ENCODE measurements at regions of chr17 and their contacts with region 1.

Region 1: GRCh38 chr17:81537343-81537855 is 9.2 kb downstream of the FSCN2 start:
- DNase-seq: peak; percentile 81
- ATAC-seq: peak; percentile 79
- H3K4me3 Mint-ChIP-seq: peak overlapping the region; percentile 27
- H3K27ac Mint-ChIP-seq: no peak overlapping the region
- H3K4me1 Mint-ChIP-seq: no peaks in the 10 kb centered on the region
- H3K27me3 Mint-ChIP-seq: peaks cover 23% of the 10 kb centered on the region
- CTCF ChIP-seq: peak; percentile 60

Region 2: DNA sequence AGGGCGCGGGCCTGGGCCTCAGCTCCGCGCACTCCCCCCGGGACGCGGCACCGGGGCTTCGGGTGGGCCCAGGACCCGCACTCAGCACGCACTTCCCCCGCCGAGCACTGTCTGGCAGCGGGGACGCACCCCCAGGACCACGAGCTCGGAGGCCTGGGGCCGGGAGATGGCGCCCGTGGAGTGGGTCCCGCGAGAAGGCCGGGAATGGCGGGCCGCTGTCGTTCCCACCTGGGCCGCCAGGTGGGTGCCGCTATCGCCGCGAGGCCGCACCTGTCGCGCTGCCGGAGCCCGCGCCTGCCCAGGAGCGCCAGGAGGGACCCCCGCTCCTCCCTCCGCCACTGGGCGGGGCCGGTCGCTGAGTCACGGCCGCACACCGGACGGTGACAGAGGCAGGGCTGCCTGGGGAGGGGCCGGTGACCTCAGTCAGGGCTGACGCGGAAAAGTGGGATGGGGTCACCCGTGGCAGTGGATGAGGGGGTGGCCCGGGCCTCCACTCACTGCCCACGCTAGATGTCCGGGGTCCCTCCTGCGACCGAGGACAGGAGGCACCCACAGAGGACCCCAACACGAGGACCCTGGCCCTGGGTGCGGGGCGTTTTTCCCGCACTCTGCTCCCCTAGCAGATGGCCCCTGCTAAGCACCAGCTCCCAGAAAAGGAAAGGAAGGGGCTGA is 18.0 kb before region 1 on chr17:
- CTCF ChIA-PET with region 1: interaction called, 31 read pairs
- POLR2A ChIA-PET with region 1: interaction called, 9 read pairs
- DNase-seq: peak; percentile 68
- ATAC-seq: peak; percentile 19
- H3K4me3 Mint-ChIP-seq: peak overlapping the region; percentile 42
- H3K27ac Mint-ChIP-seq: no peak overlapping the region
- H3K4me1 Mint-ChIP-seq: peaks cover 30% of the 10 kb centered on the region
- H3K27me3 Mint-ChIP-seq: peaks cover 42% of the 10 kb centered on the region
- CTCF ChIP-seq: peak; percentile 51